ENCODE measurements at regions of chr16 and their contacts with region 1.

Region 1: DNA sequence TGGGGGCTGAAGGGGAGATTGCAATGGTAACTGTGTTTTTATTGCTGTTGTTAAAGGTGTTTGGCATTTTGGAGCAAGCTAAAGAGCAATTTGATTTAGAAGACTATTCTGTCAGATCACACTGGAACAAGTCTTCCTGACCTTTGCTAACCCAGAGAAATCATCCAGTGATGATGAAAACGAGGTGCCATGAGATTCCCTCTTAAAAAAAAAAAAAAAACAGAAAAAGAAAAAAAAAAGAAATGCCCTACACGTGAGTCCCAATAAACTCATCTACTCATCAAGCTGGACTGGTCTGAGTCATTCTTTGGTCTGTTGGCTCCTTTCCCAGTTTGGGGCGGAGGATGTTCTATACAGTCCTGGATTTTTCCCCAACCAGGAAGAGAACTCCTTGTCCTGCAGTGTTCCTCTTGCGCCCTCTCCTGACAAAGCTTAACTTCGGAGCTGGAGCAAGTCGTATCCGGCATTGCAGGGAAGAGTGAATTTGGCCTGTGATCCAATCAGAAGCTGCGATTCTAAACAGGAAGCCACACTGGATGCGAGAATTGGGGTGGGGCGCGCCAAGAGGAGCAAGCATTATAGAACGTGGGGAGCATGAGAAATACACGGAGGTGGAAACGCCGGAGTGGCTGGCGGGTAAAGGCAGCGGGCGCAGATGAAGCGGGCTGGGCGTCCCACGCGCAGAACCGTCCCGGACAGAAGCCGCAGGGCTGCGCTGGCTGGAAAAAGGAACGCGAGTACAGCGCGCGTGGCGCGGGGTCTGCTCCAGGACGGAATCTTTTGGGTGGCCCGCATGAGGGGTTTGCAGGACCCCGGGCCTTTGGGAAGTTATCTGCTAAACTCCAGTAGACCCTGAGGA is 22.4 kb upstream of the CRYM start:
- DNase-seq: peak; percentile 100
- ATAC-seq: peak; percentile 89
- H3K4me3 ChIP-seq: peak overlapping the region; percentile 56 to 86 (median 63)
- H3K27ac ChIP-seq: peak overlapping the region; percentile 36
- H3K4me1 ChIP-seq: peaks cover 32% of the 10 kb centered on the region
- H3K27me3 ChIP-seq: no peaks in the 10 kb centered on the region
- CTCF ChIP-seq: peak; percentile 100
- EP300 ChIP-seq: peak in 1 of 2 experiments; percentile 77; a peak in 2 of 4 replicates
- POLR2A ChIP-seq: peak; percentile 34 to 40; a peak in 1 of 4 replicates
- RAD21 ChIP-seq: peak; percentile 99

Region 2: DNA sequence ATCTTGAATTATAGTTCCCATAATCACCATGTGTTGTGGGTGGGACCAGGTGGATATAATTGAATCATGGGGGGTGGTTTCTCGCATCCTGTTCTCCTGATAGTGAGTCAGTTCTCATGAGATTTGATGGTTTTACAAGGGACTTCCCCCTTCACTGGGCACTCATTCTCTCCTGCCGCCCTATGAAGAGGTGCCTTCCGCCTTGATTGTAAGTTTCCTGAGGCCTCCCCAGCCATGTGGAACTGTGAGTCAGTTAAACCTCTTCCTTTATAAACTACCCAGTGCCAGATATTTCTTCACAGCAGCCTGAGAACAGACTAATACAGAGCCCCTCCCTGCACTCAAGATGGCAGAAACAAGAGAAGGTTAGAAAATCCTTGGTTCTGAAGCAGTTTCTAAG is 115.7 kb before region 1 on chr16:
- CTCF ChIA-PET with region 1: interaction called, 34 read pairs
- POLR2A ChIA-PET with region 1: interaction called, 52 read pairs
- in situ Hi-C with region 1: loop called (anchors 5 kb)
- intact Hi-C with region 1: loop called (anchors 1 kb)
- DNase-seq: no peak
- ATAC-seq: no peak
- H3K4me3 ChIP-seq: no peak overlapping the region
- H3K27ac ChIP-seq: no peak overlapping the region
- H3K4me1 ChIP-seq: peaks cover 45% of the 10 kb centered on the region
- H3K27me3 ChIP-seq: no peaks in the 10 kb centered on the region
- CTCF ChIP-seq: no peak
- EP300 ChIP-seq: no peak
- POLR2A ChIP-seq: no peak
- RAD21 ChIP-seq: no peak

Region 3: GRCh38 chr16:21263640-21264570 is 36.6 kb before region 1 on chr16:
- CTCF ChIA-PET with region 1: no interaction called
- POLR2A ChIA-PET with region 1: interaction called, 15 read pairs
- in situ Hi-C with region 1: no loop called
- intact Hi-C with region 1: no loop called
- DNase-seq: peak; percentile 81
- ATAC-seq: peak; percentile 76
- H3K4me3 ChIP-seq: peak overlapping the region; percentile 23 to 50 (median 45)
- H3K27ac ChIP-seq: peak overlapping the region; percentile 46
- H3K4me1 ChIP-seq: peaks cover 68% of the 10 kb centered on the region
- H3K27me3 ChIP-seq: no peaks in the 10 kb centered on the region
- CTCF ChIP-seq: peak; percentile 38
- EP300 ChIP-seq: no peak
- POLR2A ChIP-seq: peak; percentile 40 to 60; a peak in 3 of 4 replicates
- RAD21 ChIP-seq: no peak

Region 4: GRCh38 chr16:21283521-21284289 is 16.8 kb before region 1 on chr16:
- CTCF ChIA-PET with region 1: interaction called, 9 read pairs
- POLR2A ChIA-PET with region 1: interaction called, 9 read pairs
- in situ Hi-C with region 1: no loop called
- intact Hi-C with region 1: loop called (anchors 1 kb)
- DNase-seq: peak; percentile 51
- ATAC-seq: peak; percentile 99
- H3K4me3 ChIP-seq: peak overlapping the region; percentile 64 to 77 (median 74)
- H3K27ac ChIP-seq: no peak overlapping the region
- H3K4me1 ChIP-seq: peaks cover 13% of the 10 kb centered on the region
- H3K27me3 ChIP-seq: peaks cover 0 to 18% of the 10 kb centered on the region in 2 experiments; a peak in 4 of 5 replicates
- CTCF ChIP-seq: peak; percentile 85
- EP300 ChIP-seq: no peak
- POLR2A ChIP-seq: no peak
- RAD21 ChIP-seq: peak; percentile 73

Region 5: GRCh38 chr16:21554795-21555585 is 254.5 kb after region 1 on chr16:
- CTCF ChIA-PET with region 1: no interaction called
- POLR2A ChIA-PET with region 1: no interaction called
- in situ Hi-C with region 1: loop called (anchors 25 kb)
- intact Hi-C with region 1: no loop called
- DNase-seq: peak; percentile 83
- ATAC-seq: peak; percentile 80
- H3K4me3 ChIP-seq: peak overlapping the region; percentile 1 to 55 (median 2); a peak in 4 of 6 replicates
- H3K27ac ChIP-seq: no peak overlapping the region
- H3K4me1 ChIP-seq: peaks cover 31% of the 10 kb centered on the region
- H3K27me3 ChIP-seq: peaks cover 16 to 58% of the 10 kb centered on the region in 2 experiments; a peak in 4 of 5 replicates
- CTCF ChIP-seq: peak; percentile 100
- EP300 ChIP-seq: peak in 1 of 2 experiments; percentile 69; a peak in 1 of 4 replicates
- POLR2A ChIP-seq: no peak
- RAD21 ChIP-seq: peak; percentile 100